Transverse colon (tissue), 4 donors: ENCODE measurements at regions of chr4 and their contacts with region 1.

Region 1: DNA sequence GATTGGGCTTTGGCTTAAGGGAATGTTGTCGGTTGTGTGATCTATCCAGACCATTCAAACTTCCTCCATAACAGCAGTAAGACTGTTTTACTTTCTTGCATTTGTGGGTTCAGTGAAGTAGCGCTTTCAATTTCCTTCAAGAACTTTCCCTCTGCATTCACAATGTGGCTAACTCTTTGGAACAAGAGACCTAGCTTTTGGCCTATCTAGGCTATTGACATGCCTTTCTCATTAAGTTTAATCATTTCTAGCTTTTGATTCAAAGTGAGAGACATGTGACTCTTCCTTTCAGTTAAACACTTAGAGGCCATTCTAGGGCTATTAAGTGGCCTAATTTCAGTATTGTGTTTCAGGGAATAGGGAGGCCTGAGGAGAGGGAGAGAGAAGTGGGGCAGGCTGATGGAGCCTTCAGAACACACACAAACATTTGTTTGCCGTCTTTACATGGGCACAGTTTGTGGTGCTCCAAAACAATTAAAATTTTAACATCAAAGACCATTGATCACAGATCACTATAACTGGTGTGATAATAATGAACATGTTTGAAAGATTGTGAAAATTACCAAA is 34.1 kb downstream of the ADH5 start:
- DNase-seq: no peak
- H3K4me3 ChIP-seq: no peak overlapping the region
- H3K27ac ChIP-seq: no peak overlapping the region
- H3K4me1 ChIP-seq: peaks cover 0 to 9% (median 3%) of the 10 kb centered on the region in 4 donors
- H3K27me3 ChIP-seq: no peaks in the 10 kb centered on the region
- CTCF ChIP-seq: no peak
- EP300 ChIP-seq: no peak
- POLR2A ChIP-seq: no peak

Region 2: GRCh38 chr4:98467627-98468072 is 586.9 kb before region 1 on chr4:
- in situ Hi-C with region 1: loop called in 2 of 4 experiments (anchors 25 kb)
- intact Hi-C with region 1: no loop called
- DNase-seq: peak; percentile 81
- H3K4me3 ChIP-seq: peak overlapping the region in 3 of 4 donors; percentile 5 to 43 (median 28)
- H3K27ac ChIP-seq: no peak overlapping the region
- H3K4me1 ChIP-seq: peaks cover 0 to 10% (median 4%) of the 10 kb centered on the region in 4 donors
- H3K27me3 ChIP-seq: no peaks in the 10 kb centered on the region
- CTCF ChIP-seq: peak; percentile 69 to 81 (median 75)
- EP300 ChIP-seq: no peak
- POLR2A ChIP-seq: no peak

Region 3: GRCh38 chr4:98995183-98996055 is 59.1 kb before region 1 on chr4 and contains the start of gene METAP1:
- in situ Hi-C with region 1: loop called in 3 of 4 experiments (anchors 10 kb)
- intact Hi-C with region 1: loop called (anchors 5 kb)
- DNase-seq: peak; percentile 97
- H3K4me3 ChIP-seq: peak within 1 kb of the TSS; percentile 86 to 99 (median 93)
- H3K27ac ChIP-seq: peak within 1 kb of the TSS; percentile 90 to 95 (median 93)
- H3K4me1 ChIP-seq: peaks cover 6 to 30% (median 19%) of the 10 kb centered on the region in 4 donors
- H3K27me3 ChIP-seq: no peaks in the 10 kb centered on the region
- CTCF ChIP-seq: peak; percentile 34 to 65 (median 54)
- EP300 ChIP-seq: no peak
- POLR2A ChIP-seq: peak; percentile 80
- total RNA-seq, gene METAP1: 34.8 to 66.1 (median 55.9) TPM

Region 4: DNA sequence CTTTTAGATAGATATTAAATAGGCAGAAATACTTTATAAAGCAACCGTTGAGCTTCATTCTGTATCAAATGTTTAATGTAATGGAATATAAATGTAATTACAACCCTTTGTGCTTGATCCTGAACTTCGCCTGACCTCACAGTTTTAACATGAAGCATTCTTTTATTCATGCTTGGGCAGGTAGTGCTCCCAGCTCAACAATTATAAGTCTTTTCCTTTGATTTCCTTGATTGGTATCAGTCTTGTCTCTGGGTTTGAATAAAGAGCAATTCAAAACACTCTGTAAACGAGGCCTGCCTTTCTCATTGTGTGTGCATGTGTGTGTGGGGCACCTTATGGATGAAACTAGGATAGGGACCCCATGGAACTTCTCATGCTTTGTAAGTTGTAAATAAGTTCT is 52.2 kb before region 1 on chr4:
- in situ Hi-C with region 1: loop called in 3 of 4 experiments (anchors 10 kb)
- intact Hi-C with region 1: loop called (anchors 5 kb)
- DNase-seq: no peak
- H3K4me3 ChIP-seq: no peak overlapping the region
- H3K27ac ChIP-seq: no peak overlapping the region
- H3K4me1 ChIP-seq: peaks cover 0 to 22% (median 5%) of the 10 kb centered on the region in 4 donors
- H3K27me3 ChIP-seq: no peaks in the 10 kb centered on the region
- CTCF ChIP-seq: no peak
- EP300 ChIP-seq: no peak
- POLR2A ChIP-seq: no peak